CD8-positive, alpha-beta T cell (primary cell): ENCODE measurements at regions of chr2 and their contacts with region 1.

Region 1: GRCh38 chr2:27628767-27629709 is at the starts of genes CCDC121 and GPN1:
- DNase-seq: peak; percentile 88 to 97 (median 95)
- ATAC-seq: peak; percentile 98
- H3K4me3 ChIP-seq: peak within 1 kb of the TSS; percentile 94 to 98
- H3K4me3 Mint-ChIP-seq: no peak within 1 kb of the TSS
- H3K27ac ChIP-seq: peak within 1 kb of the TSS; percentile 84 to 91
- H3K27ac Mint-ChIP-seq: peak within 1 kb of the TSS; percentile 46
- H3K4me1 ChIP-seq: peaks cover 18% of the 10 kb centered on the region
- H3K4me1 Mint-ChIP-seq: peaks cover 20% of the 10 kb centered on the region
- H3K27me3 ChIP-seq: no peaks in the 10 kb centered on the region
- H3K27me3 Mint-ChIP-seq: no peaks in the 10 kb centered on the region
- CTCF ChIP-seq: no peak
- total RNA-seq, gene CCDC121: 0.92 to 1.4 TPM
- total RNA-seq, gene GPN1: 40.6 to 41.7 TPM

Region 2: DNA sequence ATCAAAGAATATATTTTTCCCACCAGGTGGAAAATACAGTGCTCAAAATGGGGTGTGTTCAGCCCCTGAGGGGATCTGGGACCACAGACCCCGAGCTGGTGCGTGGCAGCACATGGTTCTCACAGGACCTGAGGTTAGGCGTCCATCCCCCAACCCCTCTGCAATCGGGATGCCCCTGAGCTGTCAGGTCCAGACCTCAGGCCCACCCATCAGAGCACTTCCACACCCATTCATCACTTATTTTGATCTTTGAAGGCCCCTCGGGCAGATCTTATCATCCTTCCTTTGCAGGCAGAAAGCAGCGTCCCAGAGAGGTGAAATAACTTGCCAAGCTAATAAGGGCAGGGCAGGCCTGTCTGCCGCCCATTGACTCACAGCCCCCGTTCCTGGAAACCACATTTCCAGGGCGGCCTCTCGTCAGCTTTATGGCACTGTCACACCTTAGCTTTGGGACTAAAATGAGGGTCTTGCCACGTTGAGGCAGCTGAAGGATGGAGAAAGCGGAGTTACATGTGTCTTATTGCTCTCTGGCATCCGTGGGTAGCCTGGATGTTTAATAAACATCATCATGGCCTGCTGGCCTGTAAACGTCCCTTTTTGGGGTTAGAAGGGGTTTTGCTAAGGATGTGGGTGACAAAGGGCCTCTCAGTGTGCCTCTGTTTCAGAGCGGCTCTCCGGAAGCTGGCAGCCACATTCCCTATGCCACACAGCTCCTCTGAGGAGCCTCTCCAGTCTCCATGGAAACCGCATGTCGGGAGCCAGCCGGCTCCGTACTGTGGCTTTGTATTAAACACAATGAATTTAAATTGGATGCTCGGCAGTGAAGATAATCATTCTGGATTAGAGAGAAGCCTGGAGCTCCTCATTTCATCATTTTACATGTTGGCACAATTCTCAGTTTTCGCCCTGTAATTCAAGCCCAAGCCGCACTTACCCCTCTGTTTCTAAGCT is 716.9 kb before region 1 on chr2:
- CTCF ChIA-PET with region 1: no interaction called
- POLR2A ChIA-PET with region 1: no interaction called
- intact Hi-C with region 1: no loop called
- DNase-seq: no peak
- ATAC-seq: no peak
- H3K4me3 ChIP-seq: no peak overlapping the region
- H3K4me3 Mint-ChIP-seq: no peak overlapping the region
- H3K27ac ChIP-seq: no peak overlapping the region
- H3K27ac Mint-ChIP-seq: no peak overlapping the region
- H3K4me1 ChIP-seq: no peaks in the 10 kb centered on the region
- H3K4me1 Mint-ChIP-seq: no peaks in the 10 kb centered on the region
- H3K27me3 ChIP-seq: peaks cover 0 to 4% of the 10 kb centered on the region in 2 experiments
- H3K27me3 Mint-ChIP-seq: peaks cover 12% of the 10 kb centered on the region
- CTCF ChIP-seq: no peak

Region 3: GRCh38 chr2:27071277-27071989 is 557.6 kb before region 1 on chr2 and contains the start of gene OST4:
- CTCF ChIA-PET with region 1: no interaction called
- POLR2A ChIA-PET with region 1: no interaction called
- intact Hi-C with region 1: loop called (anchors 10 kb)
- DNase-seq: peak; percentile 74 to 94 (median 88)
- ATAC-seq: peak; percentile 88
- H3K4me3 ChIP-seq: peak within 1 kb of the TSS; percentile 84 to 93
- H3K4me3 Mint-ChIP-seq: peak within 1 kb of the TSS; percentile 98
- H3K27ac ChIP-seq: peak within 1 kb of the TSS; percentile 92 to 98
- H3K27ac Mint-ChIP-seq: peak within 1 kb of the TSS; percentile 98
- H3K4me1 ChIP-seq: peaks cover 46% of the 10 kb centered on the region
- H3K4me1 Mint-ChIP-seq: peaks cover 76% of the 10 kb centered on the region
- H3K27me3 ChIP-seq: no peaks in the 10 kb centered on the region
- H3K27me3 Mint-ChIP-seq: no peaks in the 10 kb centered on the region
- CTCF ChIP-seq: no peak
- total RNA-seq, gene OST4: 252 to 260 TPM

Region 4: GRCh38 chr2:27409321-27410073 is 219.5 kb before region 1 on chr2 and contains the start of gene PPM1G:
- CTCF ChIA-PET with region 1: no interaction called
- POLR2A ChIA-PET with region 1: interaction called, 3 read pairs
- intact Hi-C with region 1: loop called in 1 of 2 experiments (anchors 1 kb)
- DNase-seq: peak; percentile 91 to 98 (median 97)
- ATAC-seq: peak; percentile 96
- H3K4me3 ChIP-seq: peak within 1 kb of the TSS; percentile 51 to 98
- H3K4me3 Mint-ChIP-seq: peak within 1 kb of the TSS; percentile 88
- H3K27ac ChIP-seq: peak within 1 kb of the TSS; percentile 84 to 90
- H3K27ac Mint-ChIP-seq: peak within 1 kb of the TSS; percentile 97
- H3K4me1 ChIP-seq: peaks cover 21% of the 10 kb centered on the region
- H3K4me1 Mint-ChIP-seq: peaks cover 39% of the 10 kb centered on the region
- H3K27me3 ChIP-seq: no peaks in the 10 kb centered on the region
- H3K27me3 Mint-ChIP-seq: no peaks in the 10 kb centered on the region
- CTCF ChIP-seq: no peak
- total RNA-seq, gene PPM1G: 36.4 to 38.5 TPM

Region 5: GRCh38 chr2:27582695-27583389 is 46.2 kb before region 1 on chr2 and contains the start of gene ZNF512:
- CTCF ChIA-PET with region 1: interaction called, 3 read pairs
- POLR2A ChIA-PET with region 1: no interaction called
- intact Hi-C with region 1: loop called (anchors 1 to 2 kb)
- DNase-seq: peak; percentile 54 to 89 (median 75)
- ATAC-seq: peak; percentile 76
- H3K4me3 ChIP-seq: peak within 1 kb of the TSS; percentile 57 to 62
- H3K4me3 Mint-ChIP-seq: peak within 1 kb of the TSS; percentile 98
- H3K27ac ChIP-seq: peak within 1 kb of the TSS; percentile 69 to 80
- H3K27ac Mint-ChIP-seq: peak within 1 kb of the TSS; percentile 98
- H3K4me1 ChIP-seq: peaks cover 41% of the 10 kb centered on the region
- H3K4me1 Mint-ChIP-seq: peaks cover 55% of the 10 kb centered on the region
- H3K27me3 ChIP-seq: peaks cover 0 to 3% of the 10 kb centered on the region in 2 experiments
- H3K27me3 Mint-ChIP-seq: no peaks in the 10 kb centered on the region
- CTCF ChIP-seq: no peak
- total RNA-seq, gene ZNF512: 12.4 TPM

Region 6: GRCh38 chr2:27771548-27772335 is 142.7 kb after region 1 on chr2 and contains the start of gene MRPL33:
- CTCF ChIA-PET with region 1: no interaction called
- POLR2A ChIA-PET with region 1: no interaction called
- intact Hi-C with region 1: loop called in 1 of 2 experiments (anchors 5 kb)
- DNase-seq: peak; percentile 82 to 94 (median 92)
- ATAC-seq: peak; percentile 89
- H3K4me3 ChIP-seq: peak within 1 kb of the TSS; percentile 93 to 99
- H3K4me3 Mint-ChIP-seq: peak within 1 kb of the TSS; percentile 100
- H3K27ac ChIP-seq: peak within 1 kb of the TSS; percentile 93 to 96
- H3K27ac Mint-ChIP-seq: peak within 1 kb of the TSS; percentile 100
- H3K4me1 ChIP-seq: peaks cover 27% of the 10 kb centered on the region
- H3K4me1 Mint-ChIP-seq: peaks cover 51% of the 10 kb centered on the region
- H3K27me3 ChIP-seq: no peaks in the 10 kb centered on the region
- H3K27me3 Mint-ChIP-seq: peaks cover 4% of the 10 kb centered on the region
- CTCF ChIP-seq: no peak
- total RNA-seq, gene MRPL33: 35.8 to 39.0 TPM